ENCODE measurements at regions of chr16 and their contacts with region 1.

Region 1: GRCh38 chr16:56988948-56989945 is at the start of gene NLRC5:
- DNase-seq: peak; percentile 79 to 95 (median 89)
- ATAC-seq: peak; percentile 81
- H3K4me3 ChIP-seq: peak within 1 kb of the TSS; percentile 98
- H3K4me3 Mint-ChIP-seq: peak within 1 kb of the TSS; percentile 100
- H3K27ac ChIP-seq: peak within 1 kb of the TSS; percentile 90 to 92
- H3K27ac Mint-ChIP-seq: peak within 1 kb of the TSS; percentile 98
- H3K4me1 ChIP-seq: peaks cover 70% of the 10 kb centered on the region
- H3K4me1 Mint-ChIP-seq: peaks cover 74% of the 10 kb centered on the region
- H3K27me3 ChIP-seq: no peaks in the 10 kb centered on the region
- H3K27me3 Mint-ChIP-seq: no peaks in the 10 kb centered on the region
- CTCF ChIP-seq: no peak
- total RNA-seq, gene NLRC5: 670 to 690 TPM

Region 2: DNA sequence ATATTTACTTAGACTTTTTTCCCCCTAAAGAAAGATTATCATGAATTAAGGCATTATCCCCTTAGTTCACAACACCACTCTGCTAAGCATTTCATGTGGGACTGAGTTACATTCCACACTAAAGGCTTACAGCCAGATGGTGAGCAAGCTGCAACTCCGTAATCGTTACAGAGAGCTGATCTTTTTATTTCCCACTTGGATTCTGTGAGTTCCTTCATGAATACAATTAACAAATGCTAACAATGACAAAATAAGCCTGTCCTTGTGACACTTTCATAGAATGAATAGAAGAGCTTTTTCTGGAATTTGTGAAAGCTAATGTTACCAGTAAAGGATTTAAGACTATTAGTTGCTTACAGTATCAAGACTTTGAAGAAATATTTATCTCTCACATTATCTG is 529.1 kb before region 1 on chr16:
- CTCF ChIA-PET with region 1: no interaction called
- POLR2A ChIA-PET with region 1: no interaction called
- intact Hi-C with region 1: no loop called
- DNase-seq: no peak
- ATAC-seq: no peak
- H3K4me3 ChIP-seq: no peak overlapping the region
- H3K4me3 Mint-ChIP-seq: no peak overlapping the region
- H3K27ac ChIP-seq: no peak overlapping the region
- H3K27ac Mint-ChIP-seq: no peak overlapping the region
- H3K4me1 ChIP-seq: no peaks in the 10 kb centered on the region
- H3K4me1 Mint-ChIP-seq: peaks cover 6% of the 10 kb centered on the region
- H3K27me3 ChIP-seq: no peaks in the 10 kb centered on the region
- H3K27me3 Mint-ChIP-seq: no peaks in the 10 kb centered on the region
- CTCF ChIP-seq: no peak

Region 3: DNA sequence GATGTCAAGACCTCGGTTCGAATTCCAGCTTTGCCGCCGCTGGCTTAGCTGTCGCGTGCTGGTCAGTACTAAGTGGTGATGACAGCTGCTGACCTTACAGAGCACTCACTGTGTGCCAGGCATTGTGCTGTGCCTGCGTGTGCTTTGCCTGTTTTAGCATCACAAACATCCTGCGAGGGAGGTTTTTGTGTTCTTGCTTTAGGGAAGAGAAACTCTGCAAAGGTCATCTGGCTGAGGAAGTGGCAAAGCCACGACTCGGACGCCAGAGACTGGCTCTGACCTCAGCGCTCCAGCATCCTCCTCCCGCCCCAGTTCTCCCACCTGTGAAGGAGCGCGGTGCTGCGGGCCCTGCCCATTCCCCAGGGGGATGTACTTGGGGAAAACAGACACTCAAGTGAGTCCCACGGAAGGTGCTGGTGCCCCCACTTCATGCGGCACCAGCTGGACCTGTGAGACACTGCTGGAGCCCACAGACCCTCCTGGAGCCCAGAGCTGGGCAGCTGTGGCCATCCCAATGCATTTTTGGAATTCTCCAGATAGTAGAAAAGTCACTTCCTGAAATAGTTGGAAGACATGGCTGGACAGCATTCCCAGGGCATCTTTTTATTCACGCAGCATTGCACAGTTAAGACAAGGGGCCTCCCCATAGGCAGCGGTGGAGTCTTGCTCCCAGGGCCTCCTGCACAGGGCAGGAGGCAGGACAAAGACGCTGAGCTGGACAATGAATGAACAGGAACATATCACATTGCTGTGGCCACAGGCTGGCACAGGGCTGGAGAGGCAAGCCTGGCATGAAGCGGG is 77.3 kb before region 1 on chr16:
- CTCF ChIA-PET with region 1: no interaction called
- POLR2A ChIA-PET with region 1: no interaction called
- intact Hi-C with region 1: no loop called
- DNase-seq: peak in 1 of 9 experiments; percentile 30
- ATAC-seq: no peak
- H3K4me3 ChIP-seq: no peak overlapping the region
- H3K4me3 Mint-ChIP-seq: no peak overlapping the region
- H3K27ac ChIP-seq: no peak overlapping the region
- H3K27ac Mint-ChIP-seq: no peak overlapping the region
- H3K4me1 ChIP-seq: peaks cover 26% of the 10 kb centered on the region
- H3K4me1 Mint-ChIP-seq: peaks cover 21% of the 10 kb centered on the region
- H3K27me3 ChIP-seq: no peaks in the 10 kb centered on the region
- H3K27me3 Mint-ChIP-seq: no peaks in the 10 kb centered on the region
- CTCF ChIP-seq: no peak

Region 4: GRCh38 chr16:57000271-57001025 is 11.2 kb after region 1 on chr16:
- CTCF ChIA-PET with region 1: interaction called, 9 read pairs
- POLR2A ChIA-PET with region 1: interaction called, 24 read pairs
- intact Hi-C with region 1: loop called (anchors 1 kb)
- DNase-seq: peak in 4 of 9 experiments; percentile 61 to 69 (median 65)
- ATAC-seq: peak; percentile 65
- H3K4me3 ChIP-seq: peak overlapping the region; percentile 18 to 26
- H3K4me3 Mint-ChIP-seq: peak overlapping the region; percentile 71
- H3K27ac ChIP-seq: peak overlapping the region; percentile 58 to 90
- H3K27ac Mint-ChIP-seq: peak overlapping the region; percentile 96
- H3K4me1 ChIP-seq: peaks cover 90% of the 10 kb centered on the region
- H3K4me1 Mint-ChIP-seq: peaks cover 96% of the 10 kb centered on the region
- H3K27me3 ChIP-seq: no peaks in the 10 kb centered on the region
- H3K27me3 Mint-ChIP-seq: no peaks in the 10 kb centered on the region
- CTCF ChIP-seq: no peak

Region 5: DNA sequence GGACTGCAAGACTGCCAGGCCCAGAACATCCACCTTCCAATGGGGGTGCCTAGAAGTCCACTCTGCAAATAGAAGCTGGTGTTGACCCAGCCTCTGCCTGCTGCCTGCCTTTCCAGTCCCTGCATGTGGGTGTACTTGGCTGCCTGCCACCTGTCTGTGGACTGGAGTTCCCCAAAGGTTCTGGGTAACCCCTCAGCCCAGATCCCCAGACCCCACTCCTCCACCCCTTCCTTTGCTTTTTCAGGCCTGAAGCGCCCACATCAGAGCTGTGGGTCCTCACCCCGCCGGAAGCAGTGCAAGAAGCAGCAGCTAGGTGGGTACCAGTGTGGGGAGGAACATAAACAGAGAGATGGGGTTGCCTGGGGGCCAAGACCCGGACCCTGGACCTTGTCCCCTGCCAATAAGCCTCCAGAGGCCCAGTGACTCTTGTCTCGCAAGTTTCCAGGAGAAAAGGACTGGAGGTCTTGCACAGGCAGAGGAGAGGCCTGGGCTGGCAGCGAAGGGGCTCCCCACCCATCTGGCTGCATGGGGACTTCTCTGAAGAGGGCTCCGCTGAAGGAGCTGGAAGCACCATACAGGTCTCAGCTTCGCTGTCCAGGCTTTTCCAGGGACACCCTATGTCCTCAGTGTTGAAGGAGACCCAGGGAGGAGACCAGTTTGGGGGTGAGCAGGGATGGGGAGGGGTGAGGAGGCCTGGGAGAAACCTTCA is 34.4 kb after region 1 on chr16:
- CTCF ChIA-PET with region 1: interaction called, 3 read pairs
- POLR2A ChIA-PET with region 1: interaction called, 34 read pairs
- intact Hi-C with region 1: no loop called
- DNase-seq: peak; percentile 54 to 95 (median 84)
- ATAC-seq: peak; percentile 86
- H3K4me3 ChIP-seq: peak overlapping the region in 1 of 2 experiments; percentile 34
- H3K4me3 Mint-ChIP-seq: peak overlapping the region; percentile 67
- H3K27ac ChIP-seq: peak overlapping the region in 1 of 2 experiments; percentile 60
- H3K27ac Mint-ChIP-seq: peak overlapping the region; percentile 89
- H3K4me1 ChIP-seq: peaks cover 93% of the 10 kb centered on the region
- H3K4me1 Mint-ChIP-seq: peaks cover 93% of the 10 kb centered on the region
- H3K27me3 ChIP-seq: no peaks in the 10 kb centered on the region
- H3K27me3 Mint-ChIP-seq: no peaks in the 10 kb centered on the region
- CTCF ChIP-seq: no peak

Region 6: DNA sequence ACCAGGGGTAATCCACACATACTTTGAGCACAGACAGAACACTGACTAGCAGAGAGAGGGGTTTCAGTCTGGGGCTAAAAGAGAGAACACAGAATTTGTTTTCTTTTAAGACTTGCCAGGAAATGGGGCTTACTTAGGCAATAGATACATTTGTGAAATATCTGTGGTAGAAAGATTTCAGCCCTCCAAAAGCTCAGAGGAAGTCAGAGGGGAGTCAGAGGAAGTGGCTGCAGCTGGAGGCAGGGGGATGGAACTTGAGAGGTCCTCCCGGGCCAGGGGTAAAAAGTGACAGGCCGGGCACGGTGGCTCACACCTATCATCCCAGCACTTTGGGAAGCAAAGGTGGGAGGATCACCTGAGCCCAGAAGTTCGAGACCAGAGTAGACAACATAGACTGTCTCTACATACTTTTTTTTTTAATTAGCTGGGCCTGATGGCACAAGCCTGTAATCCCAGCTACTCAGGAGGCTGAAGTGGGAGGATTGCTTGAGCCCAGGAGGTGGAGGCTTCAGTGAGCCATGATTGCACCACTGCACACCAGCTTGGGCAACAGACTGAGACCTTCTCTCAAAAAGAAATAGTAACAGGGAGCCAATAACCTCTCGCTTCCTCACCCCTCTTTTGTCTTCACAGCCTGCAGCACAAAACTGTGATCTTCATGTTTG is 50.0 kb after region 1 on chr16:
- CTCF ChIA-PET with region 1: interaction called, 25 read pairs
- POLR2A ChIA-PET with region 1: interaction called, 34 read pairs
- intact Hi-C with region 1: loop called (anchors 1 kb)
- DNase-seq: peak in 7 of 9 experiments; percentile 24 to 71 (median 45)
- ATAC-seq: peak; percentile 10
- H3K4me3 ChIP-seq: peak overlapping the region in 1 of 2 experiments; percentile 54
- H3K4me3 Mint-ChIP-seq: peak overlapping the region; percentile 71
- H3K27ac ChIP-seq: peak overlapping the region; percentile 17 to 80
- H3K27ac Mint-ChIP-seq: peak overlapping the region; percentile 99
- H3K4me1 ChIP-seq: peaks cover 97% of the 10 kb centered on the region
- H3K4me1 Mint-ChIP-seq: peaks cover 89% of the 10 kb centered on the region
- H3K27me3 ChIP-seq: no peaks in the 10 kb centered on the region
- H3K27me3 Mint-ChIP-seq: no peaks in the 10 kb centered on the region
- CTCF ChIP-seq: no peak